Breast epithelium (tissue), 4 donors: ENCODE measurements at regions of chr7 and their contacts with region 1.

Region 1: DNA sequence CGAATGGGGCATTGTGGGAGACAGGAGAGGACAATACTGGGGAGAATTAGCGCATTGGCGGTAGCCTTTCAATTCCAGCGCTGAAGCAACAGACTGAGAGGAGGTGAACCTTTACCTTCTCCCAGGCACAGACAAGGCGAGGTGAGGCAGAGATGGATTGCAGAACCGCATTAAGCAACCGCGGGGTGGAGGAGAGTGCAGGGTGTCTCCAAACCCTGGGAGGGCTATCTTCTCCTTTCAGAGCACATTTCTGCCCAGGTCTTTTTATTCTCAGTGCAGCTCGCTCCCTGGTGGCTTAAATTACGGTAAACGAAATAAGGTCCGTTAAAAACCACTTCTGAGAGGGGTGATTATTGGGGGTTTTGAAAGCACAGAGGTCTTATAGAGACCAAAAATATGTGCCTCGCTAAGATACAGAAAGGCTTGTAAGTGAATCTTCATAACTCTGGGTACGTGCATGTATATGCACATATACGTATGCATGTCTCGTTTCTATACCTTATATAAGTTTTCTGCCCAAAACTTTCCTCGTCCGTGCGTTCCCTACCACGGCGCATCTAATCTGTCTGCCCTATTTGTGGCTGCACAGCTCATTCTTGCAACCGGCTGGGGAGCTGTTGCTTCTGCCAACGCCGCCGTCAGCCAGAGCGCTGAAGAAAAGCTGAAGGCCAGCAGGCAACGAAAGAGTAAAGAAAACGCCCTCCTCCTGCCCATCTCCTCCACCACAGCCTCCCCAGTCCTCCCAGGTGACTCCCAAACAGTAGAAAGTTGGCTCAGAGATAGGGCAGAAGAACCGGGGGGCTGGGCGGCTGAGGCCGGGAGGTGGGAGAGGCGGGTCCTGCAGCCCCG is 895 bp upstream of the ZNF804B start:
- DNase-seq: no peak
- H3K4me3 ChIP-seq: peak overlapping the region; percentile 20 to 62 (median 37)
- H3K27ac ChIP-seq: no peak overlapping the region
- H3K4me1 ChIP-seq: no peaks in the 10 kb centered on the region
- H3K27me3 ChIP-seq: peaks cover 3 to 64% of the 10 kb centered on the region in 2 donors
- CTCF ChIP-seq: no peak
- POLR2A ChIP-seq: no peak

Region 2: DNA sequence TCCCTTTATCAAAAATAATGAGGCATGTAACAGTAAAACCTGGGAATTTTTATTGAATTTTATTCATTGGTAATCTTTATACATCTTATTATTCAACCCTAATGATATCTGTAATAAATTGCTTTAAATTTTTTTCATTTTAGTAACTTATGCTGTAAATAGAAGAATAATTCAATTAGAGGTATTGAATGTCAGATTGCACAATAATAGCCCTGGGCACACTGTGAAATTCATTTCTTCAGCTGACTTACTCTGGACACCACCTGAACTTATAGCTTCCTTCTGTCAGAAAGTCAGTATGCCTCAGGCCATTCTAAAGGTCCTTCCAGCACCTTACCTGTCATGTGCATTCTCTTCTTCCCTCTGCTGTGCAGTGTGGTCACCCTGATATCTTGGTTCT is 765.3 kb before region 1 on chr7:
- intact Hi-C with region 1: loop called (anchors 5 kb)
- DNase-seq: no peak
- H3K4me3 ChIP-seq: no peak overlapping the region
- H3K27ac ChIP-seq: no peak overlapping the region
- H3K4me1 ChIP-seq: no peaks in the 10 kb centered on the region
- H3K27me3 ChIP-seq: no peaks in the 10 kb centered on the region
- CTCF ChIP-seq: no peak
- POLR2A ChIP-seq: no peak

Region 3: DNA sequence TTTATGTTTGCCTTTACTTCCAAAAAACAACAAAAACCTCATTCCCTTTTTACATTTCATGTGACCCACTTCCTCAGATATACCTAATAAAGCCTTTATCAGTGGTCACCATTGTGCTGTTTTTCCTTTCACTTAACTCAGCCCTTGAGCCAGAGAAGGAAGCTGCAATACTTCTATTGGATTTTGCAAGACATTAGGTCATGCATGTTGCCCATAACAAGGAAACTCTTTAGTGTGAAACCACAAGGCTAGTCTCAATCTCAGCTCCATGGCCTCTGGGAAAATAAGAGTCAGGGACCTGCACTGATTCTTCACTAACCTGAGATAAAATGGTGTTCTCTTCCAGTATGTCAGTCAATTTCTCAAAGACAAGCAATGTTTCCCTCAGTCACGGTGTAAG is 479.7 kb before region 1 on chr7:
- intact Hi-C with region 1: no loop called
- DNase-seq: peak in 1 of 2 donors; percentile 25
- H3K4me3 ChIP-seq: no peak overlapping the region
- H3K27ac ChIP-seq: peak overlapping the region; percentile 22 to 68
- H3K4me1 ChIP-seq: no peaks in the 10 kb centered on the region
- H3K27me3 ChIP-seq: no peaks in the 10 kb centered on the region
- CTCF ChIP-seq: no peak
- POLR2A ChIP-seq: no peak